Right ventricle myocardium superior (tissue), 1 donor: ENCODE measurements at regions of chr7 and their contacts with region 1.

Region 1: DNA sequence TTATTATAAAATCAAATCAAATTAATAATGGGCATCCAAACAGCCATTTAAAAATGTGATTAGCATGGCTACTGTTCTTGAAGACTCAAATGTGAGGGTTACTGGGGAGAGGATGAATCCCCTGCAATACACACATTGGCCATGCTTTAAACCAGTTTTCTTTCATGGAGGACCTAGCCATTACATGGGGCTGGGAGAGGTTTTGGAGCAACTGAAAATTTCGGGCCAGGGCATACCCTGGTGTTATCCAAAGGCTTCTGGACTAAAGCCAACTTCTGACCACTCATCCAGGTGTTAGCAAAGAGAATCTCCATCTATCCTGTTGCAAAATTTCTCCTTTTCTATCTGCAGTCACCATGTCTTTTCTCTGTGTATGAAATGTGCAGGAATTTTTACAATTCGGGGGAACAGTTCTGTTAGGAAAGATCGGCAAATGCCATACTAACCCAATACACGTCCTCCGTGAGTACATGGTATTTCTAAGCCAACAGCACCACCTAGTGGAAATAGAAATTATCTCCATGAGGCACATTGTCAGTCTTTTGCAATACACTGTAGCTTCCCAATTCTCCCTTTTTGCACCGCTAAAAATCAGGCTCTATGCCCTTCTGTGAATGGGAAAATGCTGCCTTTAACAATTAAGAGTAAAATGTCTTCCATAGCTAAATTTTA is 47.0 kb upstream of the ZNF107 start:
- DNase-seq: no peak
- ATAC-seq: peak; percentile 79

Region 2: DNA sequence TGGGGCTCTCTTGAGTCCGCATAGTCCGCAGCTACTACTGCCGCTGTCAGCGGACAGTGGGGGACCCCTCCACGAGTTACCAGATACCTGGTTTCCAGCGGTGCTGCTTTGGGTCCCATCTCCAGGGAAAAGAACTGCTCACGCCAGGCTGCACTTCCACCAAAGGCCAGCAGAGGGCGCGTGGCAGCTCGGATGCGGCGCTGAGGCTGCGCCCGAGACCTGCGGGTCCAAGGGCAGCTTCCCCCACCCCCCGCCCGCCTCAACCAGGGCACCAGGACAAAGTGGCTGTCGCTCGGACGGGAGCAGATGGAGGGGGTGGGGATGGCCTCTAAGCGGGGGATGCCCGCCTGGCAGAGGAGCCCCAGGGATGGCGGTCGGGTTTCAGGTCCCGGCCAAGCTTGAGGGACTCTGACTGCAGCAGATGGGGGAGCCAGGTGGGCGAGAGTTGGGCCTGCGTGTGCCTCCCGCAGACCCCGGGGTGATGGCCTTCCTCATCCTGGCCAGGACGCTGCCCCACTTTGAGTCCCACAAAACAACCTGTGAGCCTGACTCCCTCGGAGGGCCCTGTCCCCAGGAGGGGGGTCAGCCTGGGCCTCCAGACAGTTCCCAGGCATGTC is 435.7 kb before region 1 on chr7:
- intact Hi-C with region 1: loop called (anchors 5 kb)
- DNase-seq: no peak
- ATAC-seq: no peak

Region 3: GRCh38 chr7:64581926-64582894 is 36.7 kb before region 1 on chr7:
- intact Hi-C with region 1: no loop called
- DNase-seq: no peak
- ATAC-seq: peak; percentile 85